GM13976 (cell line): ENCODE measurements at regions of chr14 and their contacts with region 1.

Region 1: GRCh38 chr14:91286530-91286937 is 42.0 kb upstream of the GPR68 start:
- DNase-seq: peak; percentile 85
- CTCF ChIP-seq: peak; percentile 80

Region 2: DNA sequence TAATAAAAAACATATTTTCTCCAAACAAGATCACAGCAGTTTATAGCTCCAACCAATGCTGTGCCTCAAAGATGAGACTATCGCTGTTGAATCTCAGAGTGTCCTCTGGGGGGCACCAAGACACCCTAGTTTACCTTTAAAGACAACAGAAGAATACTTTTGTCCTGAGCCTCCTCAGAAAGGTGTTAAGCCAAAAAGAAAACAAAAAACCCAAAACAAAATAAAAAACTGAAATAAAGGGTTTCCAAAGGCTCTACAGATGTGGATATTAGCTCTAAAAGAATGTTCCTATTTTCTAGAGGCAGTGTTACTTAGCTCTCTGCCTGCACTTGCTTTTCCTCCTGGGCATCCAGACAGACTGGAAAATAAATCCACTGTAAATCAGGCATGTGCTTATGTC is 383.4 kb before region 1 on chr14:
- in situ Hi-C with region 1: loop called (anchors 10 kb)
- DNase-seq: peak; percentile 71
- CTCF ChIP-seq: peak; percentile 59

Region 3: GRCh38 chr14:91388551-91388975 is 102.0 kb after region 1 on chr14:
- in situ Hi-C with region 1: no loop called
- DNase-seq: peak; percentile 78
- CTCF ChIP-seq: no peak